Activated CD4-positive, alpha-beta T cell treated with anti-CD3 and anti-CD28 coated beads, Interleukin-2, amount 10 ng/mL, durations not matched to agents 24 days and 14 days (primary cell): ENCODE measurements at regions of chr17 and their contacts with region 1.

Region 1: GRCh38 chr17:79393358-79394202 is 217.3 kb downstream of the RBFOX3 start:
- DNase-seq: peak; percentile 92
- H3K4me3 Mint-ChIP-seq: no peak overlapping the region
- H3K27ac Mint-ChIP-seq: no peak overlapping the region
- H3K4me1 Mint-ChIP-seq: no peaks in the 10 kb centered on the region
- H3K27me3 Mint-ChIP-seq: peaks cover 20% of the 10 kb centered on the region

Region 2: GRCh38 chr17:79065105-79065670 is 328.4 kb before region 1 on chr17:
- intact Hi-C with region 1: loop called (anchors 5 kb)
- DNase-seq: peak; percentile 85
- H3K4me3 Mint-ChIP-seq: no peak overlapping the region
- H3K27ac Mint-ChIP-seq: no peak overlapping the region
- H3K4me1 Mint-ChIP-seq: peaks cover 4% of the 10 kb centered on the region
- H3K27me3 Mint-ChIP-seq: peaks cover under 1% of the 10 kb centered on the region

Region 3: DNA sequence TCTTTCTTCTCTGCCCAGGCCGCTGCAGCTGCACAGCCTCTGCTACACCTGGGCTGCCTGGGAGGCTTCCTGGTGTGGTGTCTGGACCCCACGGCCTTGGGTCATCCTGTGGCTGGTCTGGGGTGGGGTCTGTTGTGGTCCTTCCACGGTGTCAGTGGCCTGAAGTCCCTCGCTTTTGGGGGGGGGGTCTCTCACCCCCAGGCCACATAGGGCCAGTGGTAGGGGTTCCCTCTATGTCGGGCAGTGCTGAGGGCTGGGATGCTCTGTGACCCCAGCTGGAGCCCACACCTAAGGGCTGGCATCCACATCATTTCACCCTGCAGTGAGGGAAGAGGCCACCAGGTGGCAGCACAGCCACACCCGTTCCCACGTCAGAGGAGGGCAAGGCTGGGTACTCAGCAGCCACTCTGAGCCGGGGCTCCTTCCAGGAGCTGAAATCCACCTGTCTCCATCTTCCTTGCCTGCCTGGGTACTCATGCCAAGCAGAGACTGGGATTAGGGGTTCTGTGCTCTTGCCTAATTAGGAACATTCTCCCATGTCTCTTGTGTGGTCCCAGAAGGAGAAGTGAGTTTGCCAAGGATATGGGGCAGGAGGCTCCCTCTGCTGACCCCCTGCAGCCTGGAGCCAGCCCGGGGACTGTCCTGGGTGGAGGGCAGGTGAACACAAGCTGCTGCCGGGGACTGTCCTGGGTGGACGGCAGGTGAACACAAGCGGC is 306.0 kb before region 1 on chr17:
- intact Hi-C with region 1: loop called (anchors 1 kb)
- DNase-seq: peak; percentile 92
- H3K4me3 Mint-ChIP-seq: no peak overlapping the region
- H3K27ac Mint-ChIP-seq: no peak overlapping the region
- H3K4me1 Mint-ChIP-seq: peaks cover 2% of the 10 kb centered on the region
- H3K27me3 Mint-ChIP-seq: peaks cover 3% of the 10 kb centered on the region